ENCODE measurements at regions of chr1 and their contacts with region 1.

Region 1: DNA sequence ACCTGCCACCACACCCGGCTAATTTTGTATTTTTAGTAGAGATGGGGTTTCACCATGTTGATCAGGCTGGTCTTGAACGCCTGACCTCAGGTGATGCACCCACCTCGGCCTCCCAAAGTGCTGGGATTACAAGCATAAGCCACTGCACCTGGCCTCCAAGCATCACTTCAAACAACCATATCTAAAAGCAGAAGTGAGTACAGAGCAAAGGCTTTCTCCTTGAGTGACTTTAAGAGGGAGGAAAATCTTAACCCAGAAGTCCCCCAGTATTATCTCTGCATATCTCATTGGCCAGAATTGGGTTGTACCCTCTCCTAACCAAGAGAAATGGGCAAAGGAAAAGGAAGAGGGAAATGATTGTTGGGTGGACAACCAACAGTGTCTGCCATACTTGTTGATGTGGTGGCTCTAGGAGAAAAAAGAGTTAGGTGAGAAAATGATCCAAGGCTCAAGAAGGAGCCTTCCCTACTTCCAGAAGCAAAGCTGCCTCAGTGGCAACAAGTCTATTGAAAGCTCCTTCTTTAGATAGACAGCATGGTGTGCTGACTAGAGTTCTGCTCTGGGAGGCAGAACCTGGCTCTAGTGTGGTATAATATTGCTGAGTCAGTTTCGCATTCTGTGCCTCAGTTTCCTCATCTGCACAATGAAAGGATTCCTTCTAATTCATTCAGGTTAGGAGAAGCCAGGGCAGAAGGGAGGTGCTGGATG is 16.8 kb upstream of the FOXE3 start:
- DNase-seq: no peak
- ATAC-seq: no peak
- H3K4me3 Mint-ChIP-seq: no peak overlapping the region
- H3K27ac Mint-ChIP-seq: no peak overlapping the region
- H3K4me1 Mint-ChIP-seq: no peaks in the 10 kb centered on the region
- H3K27me3 Mint-ChIP-seq: peaks cover 55% of the 10 kb centered on the region
- CTCF ChIP-seq: no peak

Region 2: GRCh38 chr1:47424336-47424982 is 25.2 kb after region 1 on chr1:
- CTCF ChIA-PET with region 1: interaction called, 11 read pairs
- POLR2A ChIA-PET with region 1: no interaction called
- DNase-seq: peak; percentile 75
- ATAC-seq: peak; percentile 97
- H3K4me3 Mint-ChIP-seq: no peak overlapping the region
- H3K27ac Mint-ChIP-seq: no peak overlapping the region
- H3K4me1 Mint-ChIP-seq: peaks cover 11% of the 10 kb centered on the region
- H3K27me3 Mint-ChIP-seq: peaks cover 93% of the 10 kb centered on the region
- CTCF ChIP-seq: peak; percentile 65

Region 3: DNA sequence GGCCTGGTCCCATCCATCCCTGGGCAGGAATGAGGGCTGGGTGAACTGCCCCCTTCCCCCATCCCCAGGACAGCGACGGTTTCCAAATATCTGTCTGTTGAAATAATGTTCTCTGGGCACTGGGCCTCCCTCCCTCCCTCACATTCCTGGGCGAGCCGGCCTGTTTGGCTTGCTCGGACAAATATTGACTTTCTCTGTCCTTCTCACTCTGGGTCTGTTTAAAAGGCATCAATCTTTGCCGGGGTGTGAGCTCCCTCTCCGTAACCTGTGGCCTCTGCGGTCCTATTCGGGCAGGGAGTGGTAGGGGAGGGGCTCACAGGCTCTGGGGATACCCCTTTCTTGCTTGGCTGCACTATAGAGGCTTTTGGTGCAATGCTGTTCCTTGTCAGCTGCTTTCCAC is 78.8 kb after region 1 on chr1:
- CTCF ChIA-PET with region 1: no interaction called
- POLR2A ChIA-PET with region 1: no interaction called
- DNase-seq: no peak
- ATAC-seq: no peak
- H3K4me3 Mint-ChIP-seq: no peak overlapping the region
- H3K27ac Mint-ChIP-seq: 0 out of 2 replicates have a peak overlapping the region, but pooled peaks have one; percentile 27
- H3K4me1 Mint-ChIP-seq: peaks cover 12% of the 10 kb centered on the region
- H3K27me3 Mint-ChIP-seq: peaks cover 19% of the 10 kb centered on the region
- CTCF ChIP-seq: no peak

Region 4: GRCh38 chr1:47679301-47679791 is 280.1 kb after region 1 on chr1:
- CTCF ChIA-PET with region 1: no interaction called
- POLR2A ChIA-PET with region 1: no interaction called
- DNase-seq: no peak
- ATAC-seq: no peak
- H3K4me3 Mint-ChIP-seq: no peak overlapping the region
- H3K27ac Mint-ChIP-seq: no peak overlapping the region
- H3K4me1 Mint-ChIP-seq: peaks cover 9% of the 10 kb centered on the region; the same call in 1 of the 2 replicates
- H3K27me3 Mint-ChIP-seq: peaks cover 10% of the 10 kb centered on the region
- CTCF ChIP-seq: no peak